K562 (cell line): ENCODE measurements at regions of chr2 and their contacts with region 1.

Region 1: GRCh38 chr2:85327822-85328617 is at the start of gene TGOLN2:
- DNase-seq: peak; percentile 95 to 98 (median 97)
- ATAC-seq: peak; percentile 94
- H3K4me3 ChIP-seq: peak within 1 kb of the TSS; percentile 82
- H3K27ac ChIP-seq: peak within 1 kb of the TSS; percentile 97
- H3K4me1 ChIP-seq: peaks cover 21 to 27% of the 10 kb centered on the region in 2 experiments; a peak in 4 of 5 replicates
- H3K27me3 ChIP-seq: no peaks in the 10 kb centered on the region
- CTCF ChIP-seq: 0 out of 6 replicates have a peak, but pooled peaks of 2 of the 3 experiments have one; percentile 3 to 14
- EP300 ChIP-seq: no peak
- POLR2A ChIP-seq: peak; percentile 99
- RAD21 ChIP-seq: no peak
- polyA plus RNA-seq, gene TGOLN2: 13.0 to 18.0 TPM

Region 2: GRCh38 chr2:85215448-85216401 is 112.3 kb before region 1 on chr2:
- CTCF ChIA-PET with region 1: no interaction called
- POLR2A ChIA-PET with region 1: no interaction called
- in situ Hi-C with region 1: no loop called
- intact Hi-C with region 1: no loop called
- DNase-seq: no peak
- ATAC-seq: no peak
- H3K4me3 ChIP-seq: no peak overlapping the region
- H3K27ac ChIP-seq: no peak overlapping the region
- H3K4me1 ChIP-seq: no peaks in the 10 kb centered on the region
- H3K27me3 ChIP-seq: peaks cover 42 to 55% of the 10 kb centered on the region in 2 experiments
- CTCF ChIP-seq: no peak
- EP300 ChIP-seq: no peak
- POLR2A ChIP-seq: no peak
- RAD21 ChIP-seq: no peak

Region 3: GRCh38 chr2:85230679-85231467 is 97.1 kb before region 1 on chr2:
- CTCF ChIA-PET with region 1: no interaction called
- POLR2A ChIA-PET with region 1: no interaction called
- in situ Hi-C with region 1: no loop called
- intact Hi-C with region 1: no loop called
- DNase-seq: no peak
- ATAC-seq: peak; percentile 56; the same call in 2 of the 3 replicates
- H3K4me3 ChIP-seq: no peak overlapping the region
- H3K27ac ChIP-seq: no peak overlapping the region
- H3K4me1 ChIP-seq: no peaks in the 10 kb centered on the region
- H3K27me3 ChIP-seq: peaks cover 17 to 43% of the 10 kb centered on the region in 2 experiments
- CTCF ChIP-seq: no peak
- EP300 ChIP-seq: no peak
- POLR2A ChIP-seq: no peak
- RAD21 ChIP-seq: no peak

Region 4: GRCh38 chr2:85340034-85340892 is 12.2 kb after region 1 on chr2:
- CTCF ChIA-PET with region 1: no interaction called
- POLR2A ChIA-PET with region 1: interaction called, 13 read pairs
- in situ Hi-C with region 1: no loop called
- intact Hi-C with region 1: no loop called
- DNase-seq: no peak
- ATAC-seq: peak; percentile 48; the same call in 2 of the 3 replicates
- H3K4me3 ChIP-seq: no peak overlapping the region
- H3K27ac ChIP-seq: no peak overlapping the region
- H3K4me1 ChIP-seq: peaks cover 0 to 3% of the 10 kb centered on the region in 2 experiments; a peak in 3 of 5 replicates
- H3K27me3 ChIP-seq: no peaks in the 10 kb centered on the region; a peak in 1 of 5 replicates
- CTCF ChIP-seq: no peak
- EP300 ChIP-seq: no peak
- POLR2A ChIP-seq: no peak
- RAD21 ChIP-seq: no peak

Region 5: GRCh38 chr2:85354286-85355072 is 26.5 kb after region 1 on chr2 and contains the starts of genes ELMOD3 and RETSAT:
- CTCF ChIA-PET with region 1: no interaction called
- POLR2A ChIA-PET with region 1: interaction called, 11 read pairs
- in situ Hi-C with region 1: no loop called
- intact Hi-C with region 1: loop called (anchors 1 kb)
- DNase-seq: peak; percentile 96 to 99 (median 96)
- ATAC-seq: peak; percentile 98
- H3K4me3 ChIP-seq: peak within 1 kb of the TSS; percentile 83
- H3K27ac ChIP-seq: peak within 1 kb of the TSS; percentile 84
- H3K4me1 ChIP-seq: peaks cover 9 to 15% of the 10 kb centered on the region in 2 experiments
- H3K27me3 ChIP-seq: no peaks in the 10 kb centered on the region
- CTCF ChIP-seq: no peak
- EP300 ChIP-seq: peak; percentile 44
- POLR2A ChIP-seq: peak; percentile 93
- RAD21 ChIP-seq: no peak; a peak in 1 of 4 replicates
- polyA plus RNA-seq, gene ELMOD3: 2.7 to 6.4 TPM
- polyA plus RNA-seq, gene RETSAT: 1.9 to 5.6 TPM

Region 6: DNA sequence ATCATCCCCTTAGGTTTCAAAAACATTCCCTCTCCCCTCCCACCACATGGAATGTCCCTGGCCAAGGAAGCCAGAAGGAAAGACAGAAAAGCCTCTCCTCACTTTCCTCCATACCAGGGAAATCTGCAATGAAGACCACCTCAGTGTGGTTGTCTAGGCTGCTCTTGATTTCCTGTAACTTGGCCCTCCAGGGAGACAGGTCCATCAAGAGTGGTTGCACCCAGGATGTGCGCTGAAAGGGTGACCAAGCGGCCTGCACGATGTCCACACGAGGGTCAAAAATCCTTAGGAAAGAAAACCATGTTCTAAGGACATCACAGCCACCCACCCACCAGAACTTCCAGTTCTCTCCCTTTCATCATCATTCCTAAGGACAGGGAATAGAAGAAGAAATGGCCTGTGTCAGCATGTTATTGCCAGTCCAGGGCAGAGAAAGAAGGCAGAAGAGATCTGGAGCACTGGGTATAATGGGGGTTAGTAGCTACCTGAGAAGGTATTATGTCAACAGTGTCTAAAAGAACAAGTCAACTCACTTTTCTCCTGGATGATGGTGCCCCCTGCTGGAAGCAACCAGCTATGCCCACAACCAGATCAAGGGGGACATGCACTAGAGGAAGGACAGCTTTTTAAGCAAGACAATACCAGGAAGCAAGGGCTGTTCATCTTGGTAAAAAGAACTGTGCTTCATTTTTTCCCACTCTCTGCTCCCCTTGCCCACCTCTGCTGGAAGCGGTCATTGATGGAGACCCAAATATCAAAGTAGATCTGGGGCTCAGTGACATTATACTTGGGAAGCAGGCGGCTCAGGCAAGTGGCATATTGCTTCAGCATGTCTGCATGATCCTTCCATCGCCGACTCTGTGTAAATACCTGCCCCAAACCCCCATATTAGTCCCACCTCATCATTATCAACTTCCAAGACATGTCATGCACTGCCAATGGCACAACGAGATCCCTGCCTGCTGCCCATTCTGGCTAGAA is 224.0 kb after region 1 on chr2:
- CTCF ChIA-PET with region 1: no interaction called
- POLR2A ChIA-PET with region 1: interaction called, 5 read pairs
- in situ Hi-C with region 1: no loop called
- intact Hi-C with region 1: loop called (anchors 5 kb)
- DNase-seq: peak; percentile 64 to 88 (median 72)
- ATAC-seq: peak; percentile 81
- H3K4me3 ChIP-seq: no peak overlapping the region
- H3K27ac ChIP-seq: no peak overlapping the region; the same call in 2 of the 3 replicates
- H3K4me1 ChIP-seq: no peaks in the 10 kb centered on the region; a peak in 1 of 5 replicates
- H3K27me3 ChIP-seq: no peaks in the 10 kb centered on the region
- CTCF ChIP-seq: peak; percentile 83 to 95 (median 91)
- EP300 ChIP-seq: no peak
- POLR2A ChIP-seq: no peak
- RAD21 ChIP-seq: peak; percentile 97 to 98

Region 7: DNA sequence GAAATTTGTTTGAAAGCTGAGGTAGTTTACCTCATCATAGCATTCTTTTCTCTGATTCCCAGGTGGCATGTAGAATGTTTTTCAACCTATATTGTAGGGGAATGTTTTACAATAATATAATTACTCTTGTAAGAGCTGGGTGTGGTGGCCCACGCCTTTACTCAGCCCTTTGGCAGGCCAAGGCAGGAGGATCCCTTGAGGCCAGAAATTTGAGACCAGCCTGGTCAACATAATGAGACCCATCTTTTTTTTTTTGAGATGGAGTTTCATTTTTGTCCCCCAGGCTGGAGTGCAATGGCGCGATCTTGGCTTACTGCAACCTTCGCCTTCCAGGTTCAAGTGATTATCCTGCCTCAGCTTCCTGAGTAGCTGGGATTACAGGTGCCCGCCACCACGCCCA is 291.6 kb after region 1 on chr2:
- CTCF ChIA-PET with region 1: no interaction called
- POLR2A ChIA-PET with region 1: interaction called, 3 read pairs
- in situ Hi-C with region 1: no loop called
- intact Hi-C with region 1: loop called (anchors 5 kb)
- DNase-seq: no peak
- ATAC-seq: no peak
- H3K4me3 ChIP-seq: no peak overlapping the region
- H3K27ac ChIP-seq: no peak overlapping the region
- H3K4me1 ChIP-seq: peaks cover 10 to 11% of the 10 kb centered on the region in 2 experiments; a peak in 4 of 5 replicates
- H3K27me3 ChIP-seq: no peaks in the 10 kb centered on the region
- CTCF ChIP-seq: no peak
- EP300 ChIP-seq: no peak
- POLR2A ChIP-seq: no peak
- RAD21 ChIP-seq: no peak